ENCODE measurements at regions of chr2 and their contacts with region 1.

Region 1: DNA sequence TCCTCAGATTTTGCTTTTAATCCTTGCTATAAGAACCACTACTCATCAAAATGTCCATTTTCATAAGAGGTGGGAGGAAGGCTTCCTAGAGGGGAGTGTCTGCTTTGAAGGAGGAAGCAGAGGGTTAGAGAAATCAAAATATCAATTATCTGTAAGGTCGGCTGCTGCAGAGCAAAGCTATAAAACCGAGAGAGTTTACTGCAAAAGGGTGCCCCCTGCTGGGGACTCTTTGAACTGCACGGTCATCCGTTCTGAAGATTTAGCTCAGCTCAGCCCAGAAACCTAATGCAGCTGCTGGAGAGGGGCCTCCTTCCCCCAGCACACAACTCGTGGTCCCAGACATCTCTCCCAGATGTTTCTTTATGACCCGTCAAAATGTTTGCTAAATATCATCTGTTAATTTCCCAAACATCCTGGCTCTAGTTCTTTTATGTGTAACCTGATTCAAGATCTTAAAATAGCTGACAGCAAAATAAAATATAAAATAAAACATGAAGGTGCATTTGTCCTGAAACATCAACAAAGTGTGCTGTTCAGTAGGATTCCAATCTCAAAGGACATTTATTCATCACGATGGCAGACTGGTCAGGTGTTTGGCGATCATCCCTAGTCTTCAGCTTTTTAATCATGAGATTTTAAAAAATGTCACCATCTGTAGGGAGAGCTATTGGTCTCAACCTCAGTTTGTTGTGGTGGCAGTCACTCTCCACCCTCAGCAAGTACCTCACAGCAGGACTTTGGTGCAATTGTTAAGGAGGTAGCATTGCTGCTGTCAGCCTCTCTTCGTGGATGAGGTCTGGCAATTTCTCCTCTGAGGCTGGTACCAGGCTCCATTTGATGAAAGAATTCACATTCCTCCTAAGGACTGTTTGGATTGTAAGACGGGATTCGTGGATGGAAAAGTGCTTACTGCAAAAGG is 185.9 kb downstream of the MTX2 start:
- DNase-seq: peak; percentile 82

Region 2: GRCh38 chr2:176554101-176555048 is 99.2 kb after region 1 on chr2:
- intact Hi-C with region 1: loop called (anchors 2 kb)
- DNase-seq: no peak